Right cardiac atrium (tissue), 5 donors: ENCODE measurements at regions of chr9 and their contacts with region 1.

Region 1: GRCh38 chr9:38747067-38747466 is 27.1 kb upstream of the FAM240B start:
- DNase-seq: peak in 1 of 3 donors; percentile 48
- ATAC-seq: no peak
- H3K4me3 ChIP-seq: no peak overlapping the region
- H3K27ac ChIP-seq: no peak overlapping the region
- H3K4me1 ChIP-seq: no peaks in the 10 kb centered on the region
- H3K27me3 ChIP-seq: no peaks in the 10 kb centered on the region

Region 2: GRCh38 chr9:38467404-38467803 is 279.7 kb before region 1 on chr9:
- intact Hi-C with region 1: no loop called
- DNase-seq: no peak
- ATAC-seq: no peak
- H3K4me3 ChIP-seq: no peak overlapping the region
- H3K27ac ChIP-seq: no peak overlapping the region
- H3K4me1 ChIP-seq: no peaks in the 10 kb centered on the region
- H3K27me3 ChIP-seq: no peaks in the 10 kb centered on the region

Region 3: DNA sequence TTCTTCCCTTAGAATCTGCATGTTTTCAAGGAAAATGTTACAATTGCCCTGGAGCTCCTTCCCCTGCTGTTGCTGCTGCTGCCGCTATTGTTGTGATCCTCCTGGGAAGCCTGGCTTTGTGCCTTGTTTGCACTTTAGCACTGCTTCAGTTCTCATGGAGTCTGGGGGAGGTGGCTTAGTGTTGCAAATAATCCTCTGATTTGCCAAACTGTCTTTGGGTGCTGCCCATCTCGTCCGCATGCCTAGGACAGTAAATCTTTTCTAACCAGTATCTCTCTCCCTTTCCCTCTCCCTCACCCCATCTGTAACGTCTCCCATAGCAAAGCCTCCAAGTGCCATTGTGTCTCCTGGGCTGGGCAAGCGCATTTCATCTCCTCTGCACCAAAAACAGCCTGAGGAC is 57.4 kb before region 1 on chr9:
- intact Hi-C with region 1: loop called in 1 of 4 experiments (anchors 10 kb)
- DNase-seq: no peak
- ATAC-seq: no peak
- H3K4me3 ChIP-seq: no peak overlapping the region
- H3K27ac ChIP-seq: no peak overlapping the region
- H3K4me1 ChIP-seq: no peaks in the 10 kb centered on the region
- H3K27me3 ChIP-seq: no peaks in the 10 kb centered on the region